K562 (cell line): ENCODE measurements at regions of chr2 and their contacts with region 1.

Region 1: GRCh38 chr2:101012706-101013181 is 10.7 kb downstream of the RPL31 start:
- DNase-seq: peak in 3 of 4 experiments; percentile 24 to 49 (median 28)
- ATAC-seq: no peak
- H3K4me3 ChIP-seq: no peak overlapping the region
- H3K27ac ChIP-seq: no peak overlapping the region
- H3K4me1 ChIP-seq: no peaks in the 10 kb centered on the region
- H3K27me3 ChIP-seq: no peaks in the 10 kb centered on the region
- CTCF ChIP-seq: peak; percentile 49 to 76 (median 73); a peak in 5 of 6 replicates
- EP300 ChIP-seq: no peak
- POLR2A ChIP-seq: no peak
- RAD21 ChIP-seq: peak; percentile 49 to 67

Region 2: GRCh38 chr2:100485396-100485795 is 527.3 kb before region 1 on chr2:
- CTCF ChIA-PET with region 1: no interaction called
- POLR2A ChIA-PET with region 1: no interaction called
- in situ Hi-C with region 1: no loop called
- intact Hi-C with region 1: no loop called
- DNase-seq: no peak
- ATAC-seq: no peak
- H3K4me3 ChIP-seq: no peak overlapping the region
- H3K27ac ChIP-seq: no peak overlapping the region
- H3K4me1 ChIP-seq: no peaks in the 10 kb centered on the region
- H3K27me3 ChIP-seq: peaks cover 0 to 9% of the 10 kb centered on the region in 2 experiments; a peak in 1 of 5 replicates
- CTCF ChIP-seq: no peak
- EP300 ChIP-seq: no peak
- POLR2A ChIP-seq: no peak
- RAD21 ChIP-seq: no peak

Region 3: DNA sequence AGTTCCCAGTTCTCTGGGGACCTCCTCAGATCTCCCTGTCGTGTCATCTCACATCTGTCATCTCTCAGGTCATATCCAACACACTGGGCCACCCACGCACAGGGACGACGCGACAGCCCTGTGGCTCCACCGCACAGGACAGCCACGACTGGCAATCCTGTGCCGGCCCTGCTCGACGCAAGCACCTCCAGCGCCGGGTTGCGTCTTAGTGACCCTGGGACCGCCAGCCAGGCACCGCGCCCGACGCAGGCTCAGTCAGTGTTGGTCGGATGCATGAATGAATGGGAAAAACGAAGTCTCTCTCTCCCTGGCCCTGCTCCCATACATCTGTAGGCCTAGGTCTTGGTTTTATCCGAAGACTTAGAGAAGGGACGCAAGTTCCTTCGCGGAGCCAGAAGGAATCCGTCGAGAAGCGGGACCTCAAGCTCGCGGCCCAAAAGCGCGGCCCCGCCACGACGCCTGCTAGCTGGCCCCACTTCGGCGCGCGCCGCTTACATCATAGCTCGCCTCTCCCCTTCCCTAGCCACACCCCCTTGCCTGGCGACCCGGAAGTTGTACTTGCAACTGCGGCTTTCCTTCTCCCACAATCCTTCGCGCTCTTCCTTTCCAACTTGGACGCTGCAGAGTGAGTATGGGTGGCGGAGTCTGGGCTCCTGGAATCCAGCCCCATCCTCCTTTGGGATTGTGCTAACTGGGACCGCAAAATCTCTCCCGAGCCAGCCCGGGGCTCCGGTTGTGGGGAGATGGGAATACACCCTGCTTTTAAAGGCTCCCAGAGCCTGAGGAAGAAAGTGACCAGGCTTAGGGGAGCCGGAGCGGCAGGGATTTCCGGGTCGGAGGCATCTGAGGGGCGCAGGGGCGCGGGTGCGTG is 10.8 kb before region 1 on chr2 and contains the start of gene RPL31:
- CTCF ChIA-PET with region 1: no interaction called
- POLR2A ChIA-PET with region 1: interaction called, 17 read pairs
- in situ Hi-C with region 1: no loop called
- intact Hi-C with region 1: no loop called
- DNase-seq: peak; percentile 94 to 98 (median 96)
- ATAC-seq: peak; percentile 94
- H3K4me3 ChIP-seq: peak within 1 kb of the TSS; percentile 86
- H3K27ac ChIP-seq: peak within 1 kb of the TSS; percentile 85
- H3K4me1 ChIP-seq: peaks cover 18% of the 10 kb centered on the region in 2 experiments; a peak in 4 of 5 replicates
- H3K27me3 ChIP-seq: peaks cover 3 to 7% of the 10 kb centered on the region in 2 experiments; a peak in 2 of 5 replicates
- CTCF ChIP-seq: no peak
- EP300 ChIP-seq: no peak
- POLR2A ChIP-seq: peak; percentile 99
- RAD21 ChIP-seq: no peak
- polyA plus RNA-seq, gene RPL31: 3,112 to 6,037 TPM

Region 4: DNA sequence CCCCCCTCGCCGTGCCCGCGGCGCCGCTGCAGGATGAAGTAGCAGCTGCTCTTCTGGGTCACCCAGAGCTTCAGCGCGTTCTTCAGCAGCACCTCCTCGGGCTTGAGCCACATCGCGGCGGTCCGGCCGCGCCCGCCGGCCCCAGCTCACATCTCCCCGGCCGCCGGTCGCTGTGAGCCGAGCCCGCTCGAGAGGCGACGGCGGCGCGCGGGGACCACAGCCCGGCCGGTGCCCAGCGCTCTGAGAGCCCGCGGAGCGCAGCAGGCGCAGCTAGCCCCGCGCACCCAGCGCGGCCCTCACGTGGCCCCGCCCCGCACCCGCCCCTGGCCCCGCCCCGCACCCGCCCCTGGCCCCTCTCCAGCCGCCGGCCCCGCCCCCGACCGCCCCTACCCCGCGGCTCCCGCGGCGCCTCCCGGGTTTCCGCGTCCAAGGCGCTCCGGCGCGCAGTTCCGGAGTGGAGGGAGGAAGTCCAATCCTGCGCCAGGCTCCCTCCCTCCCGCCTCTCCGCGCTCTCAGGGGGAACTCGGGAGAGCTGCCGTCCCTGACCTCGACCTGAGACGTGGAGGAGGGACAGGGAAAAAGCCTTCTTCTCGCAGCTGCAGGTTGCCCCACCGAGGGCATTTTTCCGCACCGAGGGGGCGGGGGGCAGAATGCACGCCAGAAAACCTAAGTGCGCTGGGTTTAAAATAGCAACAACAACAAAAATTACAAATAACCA is 138.6 kb after region 1 on chr2 and contains the start of gene TBC1D8:
- CTCF ChIA-PET with region 1: interaction called, 4 read pairs
- POLR2A ChIA-PET with region 1: no interaction called
- in situ Hi-C with region 1: no loop called
- intact Hi-C with region 1: loop called (anchors 2 kb)
- DNase-seq: peak; percentile 84 to 97 (median 94)
- ATAC-seq: peak; percentile 92
- H3K4me3 ChIP-seq: peak within 1 kb of the TSS; percentile 50
- H3K27ac ChIP-seq: no peak within 1 kb of the TSS
- H3K4me1 ChIP-seq: peaks cover 2 to 15% of the 10 kb centered on the region in 2 experiments; a peak in 4 of 5 replicates
- H3K27me3 ChIP-seq: peaks cover 41 to 64% of the 10 kb centered on the region in 2 experiments
- CTCF ChIP-seq: no peak
- EP300 ChIP-seq: no peak
- POLR2A ChIP-seq: peak; percentile 57
- RAD21 ChIP-seq: 0 out of 4 replicates have a peak, but pooled peaks of 1 of the 2 experiments have one; percentile 10
- polyA plus RNA-seq, gene TBC1D8: 0.41 to 0.70 TPM

Region 5: GRCh38 chr2:101252408-101253012 is 239.8 kb after region 1 on chr2 and contains the start of gene CNOT11:
- CTCF ChIA-PET with region 1: interaction called, 5 read pairs
- POLR2A ChIA-PET with region 1: no interaction called
- in situ Hi-C with region 1: no loop called
- intact Hi-C with region 1: loop called (anchors 2 kb)
- DNase-seq: peak; percentile 95 to 98 (median 96)
- ATAC-seq: peak; percentile 96
- H3K4me3 ChIP-seq: peak within 1 kb of the TSS; percentile 97
- H3K27ac ChIP-seq: peak within 1 kb of the TSS; percentile 89
- H3K4me1 ChIP-seq: peaks cover 22 to 24% of the 10 kb centered on the region in 2 experiments
- H3K27me3 ChIP-seq: no peaks in the 10 kb centered on the region
- CTCF ChIP-seq: no peak
- EP300 ChIP-seq: no peak
- POLR2A ChIP-seq: peak; percentile 96
- RAD21 ChIP-seq: peak in 1 of 2 experiments; percentile 6; a peak in 1 of 4 replicates
- polyA plus RNA-seq, gene CNOT11: 12.7 to 13.2 TPM

Region 6: GRCh38 chr2:101308432-101309210 is 295.9 kb after region 1 on chr2 and contains the start of gene RNF149:
- CTCF ChIA-PET with region 1: no interaction called
- POLR2A ChIA-PET with region 1: no interaction called
- in situ Hi-C with region 1: no loop called
- intact Hi-C with region 1: no loop called
- DNase-seq: peak; percentile 93 to 100 (median 100)
- ATAC-seq: peak; percentile 91
- H3K4me3 ChIP-seq: peak within 1 kb of the TSS; percentile 72
- H3K27ac ChIP-seq: peak within 1 kb of the TSS; percentile 91
- H3K4me1 ChIP-seq: peaks cover 16 to 28% of the 10 kb centered on the region in 2 experiments; a peak in 4 of 5 replicates
- H3K27me3 ChIP-seq: no peaks in the 10 kb centered on the region
- CTCF ChIP-seq: no peak
- EP300 ChIP-seq: no peak
- POLR2A ChIP-seq: peak; percentile 92
- RAD21 ChIP-seq: 0 out of 4 replicates have a peak, but pooled peaks of 1 of the 2 experiments have one; percentile 10
- polyA plus RNA-seq, gene RNF149: 9.0 to 9.5 TPM